HCT116 (cell line): ENCODE measurements at regions of chr16 and their contacts with region 1.

Region 1: GRCh38 chr16:68237243-68238028 is 1.5 kb upstream of the ESRP2 start:
- DNase-seq: peak; percentile 96
- ATAC-seq: peak; percentile 77
- H3K4me3 ChIP-seq: peak overlapping the region; percentile 56 to 88
- H3K27ac ChIP-seq: peak overlapping the region; percentile 86
- H3K4me1 ChIP-seq: peaks cover 29 to 47% of the 10 kb centered on the region in 2 experiments
- H3K27me3 ChIP-seq: no peaks in the 10 kb centered on the region
- CTCF ChIP-seq: no peak
- POLR2A ChIP-seq: peak; percentile 94
- RAD21 ChIP-seq: no peak

Region 2: DNA sequence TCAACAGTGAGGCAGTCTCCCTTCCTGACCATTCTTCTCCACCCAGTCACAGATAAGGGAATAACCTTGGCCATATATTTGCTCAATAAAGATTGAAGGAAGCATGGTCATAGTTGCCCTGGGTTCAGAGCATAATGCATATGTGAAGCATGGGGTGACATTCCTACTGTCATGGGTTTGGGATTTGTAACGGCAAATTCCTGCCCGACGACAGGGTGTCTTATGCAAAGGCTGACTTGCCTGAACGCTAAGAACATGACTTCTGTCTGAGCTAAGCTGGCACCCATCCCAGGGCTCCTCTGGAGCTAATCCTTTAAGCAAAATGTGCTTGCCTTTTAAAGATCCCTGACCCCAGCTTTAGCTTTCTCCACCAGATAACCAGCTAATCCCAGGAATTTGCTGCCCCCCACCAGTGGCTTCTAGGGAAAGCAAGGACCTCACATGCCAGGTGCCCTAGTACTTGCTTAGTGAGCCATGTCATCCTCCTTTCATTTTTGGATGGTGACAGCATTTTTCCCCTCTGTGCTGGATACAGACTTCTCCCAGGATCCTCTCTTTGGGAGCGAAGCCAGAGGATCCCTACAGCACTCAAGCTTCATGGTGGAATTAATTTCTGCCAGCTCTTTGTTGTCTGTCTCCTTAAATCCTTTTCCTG is 61.6 kb after region 1 on chr16:
- CTCF ChIA-PET with region 1: no interaction called
- POLR2A ChIA-PET with region 1: no interaction called
- RAD21 ChIA-PET with region 1: no interaction called
- intact Hi-C with region 1: no loop called
- DNase-seq: no peak
- ATAC-seq: no peak
- H3K4me3 ChIP-seq: no peak overlapping the region
- H3K27ac ChIP-seq: 0 out of 2 replicates have a peak overlapping the region, but pooled peaks have one; percentile 10
- H3K4me1 ChIP-seq: no peaks in the 10 kb centered on the region
- H3K27me3 ChIP-seq: no peaks in the 10 kb centered on the region
- CTCF ChIP-seq: no peak
- POLR2A ChIP-seq: no peak
- RAD21 ChIP-seq: no peak

Region 3: GRCh38 chr16:68310761-68311511 is 73.5 kb after region 1 on chr16 and contains the starts of genes PRMT7 and SLC7A6OS:
- CTCF ChIA-PET with region 1: no interaction called
- POLR2A ChIA-PET with region 1: no interaction called
- RAD21 ChIA-PET with region 1: no interaction called
- intact Hi-C with region 1: loop called (anchors 2 kb)
- DNase-seq: peak; percentile 74
- ATAC-seq: peak; percentile 97
- H3K4me3 ChIP-seq: peak within 1 kb of the TSS; percentile 96 to 97
- H3K27ac ChIP-seq: peak within 1 kb of the TSS; percentile 70
- H3K4me1 ChIP-seq: peaks cover 7 to 17% of the 10 kb centered on the region in 2 experiments; a peak in 3 of 4 replicates
- H3K27me3 ChIP-seq: no peaks in the 10 kb centered on the region
- CTCF ChIP-seq: no peak
- POLR2A ChIP-seq: peak; percentile 89
- RAD21 ChIP-seq: no peak
- total RNA-seq, gene PRMT7: 34.4 TPM
- total RNA-seq, gene SLC7A6OS: 16.4 TPM